Naive thymus-derived CD4-positive, alpha-beta T cell (primary cell): ENCODE measurements at regions of chr17 and their contacts with region 1.

Region 1: DNA sequence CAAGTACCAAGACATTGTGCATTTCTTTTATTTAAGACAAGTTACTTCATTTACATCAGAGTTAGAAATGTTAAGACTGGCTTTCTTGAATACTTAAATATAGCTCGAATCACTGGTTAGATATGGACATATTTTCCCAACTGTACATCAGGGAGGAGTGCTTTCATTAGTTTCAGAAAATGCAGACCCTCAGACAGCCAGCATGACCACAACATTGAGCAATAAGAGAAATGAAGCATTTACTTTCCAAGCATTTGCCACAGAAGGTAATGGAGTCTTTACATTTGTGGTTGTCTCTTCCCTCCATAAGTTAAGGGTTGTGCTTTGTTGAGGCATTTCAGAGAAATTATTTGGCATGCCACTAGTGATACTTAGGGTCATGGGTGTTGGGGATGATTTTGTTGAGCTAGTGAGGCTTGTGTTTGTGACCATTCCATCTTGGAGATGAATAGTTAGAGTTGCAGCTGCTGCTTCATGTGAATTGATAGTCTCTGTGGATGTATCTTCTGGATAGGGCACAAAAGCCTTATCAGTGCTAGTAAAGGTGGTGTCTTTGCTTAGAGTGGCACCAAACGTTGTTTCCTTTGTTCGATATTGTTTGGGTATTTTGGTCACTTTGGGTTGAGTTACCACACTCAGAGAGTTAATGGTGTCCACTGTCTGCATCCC is 2.1 kb downstream of the OMG start:
- DNase-seq: no peak
- ATAC-seq: no peak
- H3K4me3 ChIP-seq: no peak overlapping the region
- H3K4me3 Mint-ChIP-seq: no peak overlapping the region
- H3K27ac ChIP-seq: no peak overlapping the region
- H3K27ac Mint-ChIP-seq: peak overlapping the region in 1 of 9 donors; percentile 7
- H3K4me1 ChIP-seq: no peaks in the 10 kb centered on the region
- H3K4me1 Mint-ChIP-seq: peaks cover 11 to 56% (median 30%) of the 10 kb centered on the region in 7 donors
- H3K27me3 ChIP-seq: no peaks in the 10 kb centered on the region
- H3K27me3 Mint-ChIP-seq: no peaks in the 10 kb centered on the region

Region 2: GRCh38 chr17:31327534-31328159 is 32.7 kb after region 1 on chr17:
- CTCF ChIA-PET with region 1: no interaction called
- POLR2A ChIA-PET with region 1: no interaction called
- intact Hi-C with region 1: loop called in 1 of 2 experiments (anchors 5 kb)
- DNase-seq: no peak
- ATAC-seq: no peak
- H3K4me3 ChIP-seq: no peak overlapping the region
- H3K4me3 Mint-ChIP-seq: no peak overlapping the region
- H3K27ac ChIP-seq: no peak overlapping the region
- H3K27ac Mint-ChIP-seq: no peak overlapping the region
- H3K4me1 ChIP-seq: no peaks in the 10 kb centered on the region
- H3K4me1 Mint-ChIP-seq: peaks cover 0 to 22% (median 13%) of the 10 kb centered on the region in 7 donors
- H3K27me3 ChIP-seq: no peaks in the 10 kb centered on the region
- H3K27me3 Mint-ChIP-seq: no peaks in the 10 kb centered on the region